ENCODE measurements at regions of chr12 and their contacts with region 1.

Region 1: DNA sequence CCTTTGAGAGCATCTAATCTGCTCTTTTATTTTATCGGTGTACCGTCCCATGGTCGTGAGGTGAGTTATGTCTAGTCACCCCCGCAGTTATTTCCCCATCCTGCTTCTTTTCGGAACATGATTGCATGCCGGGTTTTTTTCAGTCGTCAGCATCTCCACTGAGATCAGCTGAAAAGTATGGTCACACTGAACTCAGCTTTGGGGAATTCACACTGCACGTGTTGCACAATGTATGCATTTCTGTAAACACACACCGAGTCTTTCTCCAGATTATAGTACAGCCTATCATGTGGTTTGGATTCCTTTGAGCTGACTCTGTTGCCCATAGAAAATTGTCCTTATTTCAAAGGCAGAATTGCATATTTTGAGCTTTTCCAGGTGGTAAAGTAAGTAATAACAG is 24.6 kb downstream of the PLXNC1 start:
- DNase-seq: peak; percentile 94
- ATAC-seq: peak; percentile 93
- H3K4me3 ChIP-seq: no peak overlapping the region
- H3K27ac ChIP-seq: peak overlapping the region; percentile 59
- H3K4me1 ChIP-seq: peaks cover 60% of the 10 kb centered on the region
- H3K27me3 ChIP-seq: no peaks in the 10 kb centered on the region
- CTCF ChIP-seq: no peak
- EP300 ChIP-seq: peak; percentile 81 to 85
- POLR2A ChIP-seq: no peak
- RAD21 ChIP-seq: no peak

Region 2: DNA sequence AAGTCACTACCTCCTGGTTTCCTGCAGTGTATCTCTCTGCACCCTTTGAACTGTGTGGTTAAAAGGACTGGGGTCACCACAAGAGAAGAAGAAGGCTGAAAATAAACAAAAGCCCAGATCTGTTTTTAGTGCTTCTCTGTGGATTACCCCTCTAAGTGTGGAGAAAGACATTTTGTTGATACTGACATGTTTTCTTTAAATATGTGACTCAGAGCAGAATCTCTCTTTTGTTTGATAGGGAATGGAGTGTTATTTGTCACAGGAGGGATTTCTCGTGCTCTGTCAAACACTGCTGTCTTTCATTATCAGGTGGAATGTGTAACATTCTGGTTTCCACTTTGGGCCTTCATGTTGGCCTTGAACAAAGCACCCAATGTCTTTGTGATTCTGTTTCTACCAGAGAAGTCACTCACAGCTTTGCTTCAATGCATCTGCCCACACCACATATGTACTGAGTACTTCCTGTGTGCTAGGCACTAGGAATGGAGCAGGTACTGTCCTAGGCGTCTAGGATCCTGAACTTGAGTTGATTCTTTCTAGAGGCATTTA is 57.5 kb after region 1 on chr12:
- CTCF ChIA-PET with region 1: no interaction called
- POLR2A ChIA-PET with region 1: no interaction called
- in situ Hi-C with region 1: loop called (anchors 5 kb)
- intact Hi-C with region 1: loop called (anchors 1 kb)
- DNase-seq: peak; percentile 99
- ATAC-seq: peak; percentile 97
- H3K4me3 ChIP-seq: peak overlapping the region in 1 of 3 experiments; percentile 4; a peak in 1 of 6 replicates
- H3K27ac ChIP-seq: peak overlapping the region; percentile 82
- H3K4me1 ChIP-seq: peaks cover 49% of the 10 kb centered on the region
- H3K27me3 ChIP-seq: no peaks in the 10 kb centered on the region
- CTCF ChIP-seq: no peak
- EP300 ChIP-seq: peak in 1 of 2 experiments; percentile 90; a peak in 2 of 4 replicates
- POLR2A ChIP-seq: 0 out of 4 replicates have a peak, but pooled peaks of 1 of the 2 experiments have one; percentile 33
- RAD21 ChIP-seq: no peak; the same call in 1 of the 2 replicates